PC-9 (cell line): ENCODE measurements at regions of chr6 and their contacts with region 1.

Region 1: DNA sequence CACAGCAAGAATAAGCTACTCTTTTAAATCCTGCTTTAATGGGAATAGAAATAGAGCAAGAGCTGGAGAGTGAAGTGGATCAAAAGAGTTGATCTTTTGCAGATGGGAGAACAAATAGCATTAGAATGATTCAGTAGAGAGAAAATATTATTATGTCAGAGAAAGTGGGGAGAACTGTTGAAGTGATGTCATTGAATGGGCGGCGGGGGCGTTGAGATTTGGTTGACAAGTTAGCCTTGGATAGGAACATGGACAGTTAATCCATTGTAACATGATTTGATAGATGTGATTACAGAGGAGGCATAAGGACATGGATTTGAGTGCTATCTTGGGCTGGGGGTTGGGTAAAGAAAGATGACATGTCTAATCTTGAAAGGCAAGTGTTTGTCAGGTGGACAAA is 9.2 kb downstream of the ATAT1 start:
- DNase-seq: no peak
- H3K4me3 ChIP-seq: no peak overlapping the region
- H3K27ac ChIP-seq: no peak overlapping the region
- H3K4me1 ChIP-seq: no peaks in the 10 kb centered on the region
- H3K27me3 ChIP-seq: no peaks in the 10 kb centered on the region
- CTCF ChIP-seq: no peak

Region 2: GRCh38 chr6:30985490-30985889 is 349.7 kb after region 1 on chr6:
- CTCF ChIA-PET with region 1: no interaction called
- POLR2A ChIA-PET with region 1: interaction called, 35 read pairs
- intact Hi-C with region 1: no loop called
- DNase-seq: no peak
- H3K4me3 ChIP-seq: no peak overlapping the region
- H3K27ac ChIP-seq: no peak overlapping the region
- H3K4me1 ChIP-seq: 0 out of 2 replicates have a peak, but pooled peaks cover 5% of the 10 kb centered on the region
- H3K27me3 ChIP-seq: no peaks in the 10 kb centered on the region
- CTCF ChIP-seq: no peak

Region 3: GRCh38 chr6:31007694-31008093 is 371.9 kb after region 1 on chr6:
- CTCF ChIA-PET with region 1: no interaction called
- POLR2A ChIA-PET with region 1: no interaction called
- intact Hi-C with region 1: no loop called
- DNase-seq: peak; percentile 58 to 97
- H3K4me3 ChIP-seq: no peak overlapping the region
- H3K27ac ChIP-seq: peak overlapping the region; percentile 75
- H3K4me1 ChIP-seq: peaks cover 67% of the 10 kb centered on the region
- H3K27me3 ChIP-seq: no peaks in the 10 kb centered on the region
- CTCF ChIP-seq: no peak